HEK293T (cell line): ENCODE measurements at regions of chr21 and their contacts with region 1.

Region 1: DNA sequence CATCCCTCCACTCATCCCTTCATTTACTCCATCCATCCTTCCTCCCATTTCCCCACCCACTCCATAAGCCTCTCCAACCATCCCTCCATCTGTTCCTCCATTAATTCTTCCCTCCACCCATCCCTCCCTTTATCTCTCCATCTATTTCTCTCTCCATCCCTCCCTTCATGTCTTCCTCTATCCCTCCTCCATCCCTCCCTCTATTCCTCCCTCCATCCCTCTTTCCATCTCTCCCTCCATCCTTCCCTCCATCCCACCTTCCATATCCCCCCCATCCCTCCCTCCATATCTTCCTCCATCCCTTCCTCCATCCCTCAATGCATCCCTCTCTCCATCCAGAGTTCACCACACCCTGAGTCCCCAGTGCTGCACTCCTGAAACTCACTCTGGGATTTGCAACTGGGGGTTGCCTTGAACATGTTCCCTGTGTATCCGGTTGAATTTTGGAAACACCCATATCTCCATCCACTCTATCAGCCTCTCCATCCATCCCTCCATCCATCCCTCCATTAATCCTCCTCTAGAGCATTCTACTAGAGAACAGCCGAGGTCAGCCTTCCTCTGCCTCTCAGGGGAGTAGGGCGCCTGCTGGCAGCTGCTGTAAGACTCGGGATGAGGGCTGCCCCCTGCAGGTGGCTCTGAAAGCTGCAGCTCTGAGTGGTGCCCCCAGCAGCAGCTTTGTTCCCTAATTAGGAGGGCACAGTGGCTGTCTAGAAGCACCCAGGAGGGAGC is 39.4 kb downstream of the ABCG1 start:
- DNase-seq: peak; percentile 91

Region 2: GRCh38 chr21:42145569-42146272 is 112.6 kb before region 1 on chr21:
- CTCF ChIA-PET with region 1: interaction called, 19 read pairs
- POLR2A ChIA-PET with region 1: no interaction called
- DNase-seq: peak; percentile 91

Region 3: DNA sequence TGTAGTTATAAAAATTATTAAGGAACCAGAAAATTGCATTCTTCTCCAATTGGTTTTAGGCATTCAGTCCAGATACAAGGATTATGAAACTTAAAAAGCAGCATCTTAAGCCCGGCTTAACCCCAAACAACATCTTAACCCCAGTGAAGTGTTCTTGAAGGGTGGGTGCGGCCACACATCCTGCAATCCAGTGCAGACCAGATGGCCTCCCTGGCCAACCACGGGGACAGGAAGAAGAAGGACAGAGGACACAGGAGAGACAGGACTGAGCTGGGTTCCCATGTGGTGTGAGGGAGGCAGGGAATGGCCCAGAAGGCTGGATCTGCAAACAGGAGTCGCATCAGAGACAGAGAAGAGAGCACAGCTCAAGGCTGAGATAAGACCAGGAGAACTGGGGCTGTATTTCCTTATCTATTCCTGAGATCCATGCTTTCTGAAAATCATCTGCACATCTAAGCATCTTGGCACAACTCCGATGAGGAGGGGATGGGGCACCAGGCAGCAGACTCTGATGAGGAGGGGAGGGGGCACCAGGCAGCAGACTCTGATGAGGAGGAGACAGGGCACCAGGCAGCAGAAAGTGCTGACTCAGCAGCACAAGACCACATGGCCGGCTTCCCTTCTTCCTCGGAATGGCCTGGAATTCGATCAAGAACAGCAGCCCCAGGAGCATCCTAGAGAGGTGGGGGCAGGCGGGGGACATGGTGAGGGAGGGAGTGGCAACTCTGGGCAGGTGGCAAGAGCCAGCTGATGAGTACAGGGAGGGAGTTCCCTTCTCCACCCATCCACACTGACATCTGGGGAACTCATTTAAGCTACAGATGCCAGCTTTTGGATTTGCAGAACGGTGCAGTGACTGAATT is 12.8 kb before region 1 on chr21:
- CTCF ChIA-PET with region 1: interaction called, 11 read pairs
- POLR2A ChIA-PET with region 1: interaction called, 4 read pairs
- DNase-seq: no peak

Region 4: GRCh38 chr21:42289926-42290325 is 31.6 kb after region 1 on chr21:
- CTCF ChIA-PET with region 1: no interaction called
- POLR2A ChIA-PET with region 1: no interaction called
- DNase-seq: no peak

Region 5: GRCh38 chr21:42350896-42351543 is 92.7 kb after region 1 on chr21 and contains the start of gene TFF2:
- CTCF ChIA-PET with region 1: no interaction called
- POLR2A ChIA-PET with region 1: no interaction called
- DNase-seq: no peak